ENCODE measurements at regions of chr2 and their contacts with region 1.

Region 1: DNA sequence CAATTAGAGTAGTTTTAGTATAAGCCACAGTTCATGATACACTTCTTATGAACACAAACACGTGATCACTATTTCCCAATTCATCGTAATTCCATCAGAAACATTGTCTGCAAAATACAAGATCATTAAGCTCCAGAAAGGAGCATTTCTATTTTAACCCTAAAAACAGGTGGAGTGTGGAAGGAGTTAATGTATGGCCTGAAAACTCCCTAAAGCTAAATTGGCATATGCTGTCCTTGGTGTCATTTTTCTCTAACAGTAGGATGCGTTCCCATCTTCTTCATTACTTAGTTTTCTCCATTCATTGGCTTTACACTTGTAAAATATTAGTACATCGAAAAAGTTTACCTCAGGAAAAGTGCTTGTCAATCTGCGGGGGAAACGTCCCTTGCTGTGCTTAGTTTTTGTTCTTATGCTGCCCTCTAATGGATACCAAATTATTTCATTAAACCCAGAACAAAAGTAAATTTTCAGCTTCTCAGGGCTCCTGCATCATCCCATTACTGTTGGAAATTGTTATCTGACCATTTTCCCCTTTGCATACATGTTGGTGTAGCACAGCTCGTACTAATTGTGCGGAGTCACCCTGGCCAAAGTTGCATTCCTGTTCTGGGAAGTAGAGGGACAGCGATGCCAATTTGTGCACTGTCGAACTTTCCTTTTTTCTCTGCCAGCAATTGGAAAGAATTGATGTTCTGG is 153.4 kb downstream of the GPD2 start:
- ATAC-seq: peak in 5 of 8 experiments; percentile 30 to 82 (median 73)
- H3K4me3 ChIP-seq: no peak overlapping the region
- H3K27ac ChIP-seq: no peak overlapping the region
- H3K4me1 ChIP-seq: peaks cover 3 to 15% of the 10 kb centered on the region in 2 donors

Region 2: GRCh38 chr2:156341452-156342253 is 247.9 kb before region 1 on chr2:
- in situ Hi-C with region 1: loop called in 4 of 9 experiments (anchors 25 kb)
- ATAC-seq: peak; percentile 63 to 82 (median 70)
- H3K4me3 ChIP-seq: peak overlapping the region; percentile 59 to 93 (median 80)
- H3K27ac ChIP-seq: peak overlapping the region; percentile 9 to 77
- H3K4me1 ChIP-seq: peaks cover 0 to 3% of the 10 kb centered on the region in 2 donors

Region 3: DNA sequence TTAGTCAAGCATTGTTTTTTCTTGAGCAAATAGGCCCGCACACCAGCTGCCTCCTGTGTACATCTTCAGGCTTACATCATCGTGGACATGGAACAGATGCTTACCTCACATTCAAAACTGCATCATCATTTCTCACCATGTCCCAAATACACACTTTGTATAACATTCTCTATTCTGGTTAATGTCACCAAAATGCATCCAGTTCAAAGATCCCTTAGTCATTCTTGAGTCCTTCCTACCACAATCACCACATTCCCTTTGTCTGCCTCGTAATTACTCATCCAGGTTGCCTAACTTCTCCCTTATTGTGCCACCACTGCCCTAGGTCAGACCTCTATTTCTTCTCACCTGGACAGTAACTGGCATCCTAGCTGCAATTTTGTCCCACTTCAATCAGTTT is 294.3 kb after region 1 on chr2:
- in situ Hi-C with region 1: loop called in 2 of 9 experiments (anchors 10 to 25 kb)
- ATAC-seq: peak in 2 of 8 experiments; percentile 43 to 64
- H3K4me3 ChIP-seq: no peak overlapping the region
- H3K27ac ChIP-seq: no peak overlapping the region
- H3K4me1 ChIP-seq: no peaks in the 10 kb centered on the region

Measured in motor neuron (in vitro differentiated cells).